Aorta (tissue), 5 donors: ENCODE measurements at regions of chr16 and their contacts with region 1.

Region 1: GRCh38 chr16:714558-715476 is at the start of gene METRN:
- DNase-seq: peak; percentile 94 to 98
- ATAC-seq: peak; percentile 91
- H3K4me3 ChIP-seq: peak within 1 kb of the TSS; percentile 50 to 64
- H3K27ac ChIP-seq: no peak within 1 kb of the TSS
- H3K4me1 ChIP-seq: no peaks in the 10 kb centered on the region
- H3K27me3 ChIP-seq: no peaks in the 10 kb centered on the region
- total RNA-seq, gene METRN: 22.7 to 26.6 TPM

Region 2: DNA sequence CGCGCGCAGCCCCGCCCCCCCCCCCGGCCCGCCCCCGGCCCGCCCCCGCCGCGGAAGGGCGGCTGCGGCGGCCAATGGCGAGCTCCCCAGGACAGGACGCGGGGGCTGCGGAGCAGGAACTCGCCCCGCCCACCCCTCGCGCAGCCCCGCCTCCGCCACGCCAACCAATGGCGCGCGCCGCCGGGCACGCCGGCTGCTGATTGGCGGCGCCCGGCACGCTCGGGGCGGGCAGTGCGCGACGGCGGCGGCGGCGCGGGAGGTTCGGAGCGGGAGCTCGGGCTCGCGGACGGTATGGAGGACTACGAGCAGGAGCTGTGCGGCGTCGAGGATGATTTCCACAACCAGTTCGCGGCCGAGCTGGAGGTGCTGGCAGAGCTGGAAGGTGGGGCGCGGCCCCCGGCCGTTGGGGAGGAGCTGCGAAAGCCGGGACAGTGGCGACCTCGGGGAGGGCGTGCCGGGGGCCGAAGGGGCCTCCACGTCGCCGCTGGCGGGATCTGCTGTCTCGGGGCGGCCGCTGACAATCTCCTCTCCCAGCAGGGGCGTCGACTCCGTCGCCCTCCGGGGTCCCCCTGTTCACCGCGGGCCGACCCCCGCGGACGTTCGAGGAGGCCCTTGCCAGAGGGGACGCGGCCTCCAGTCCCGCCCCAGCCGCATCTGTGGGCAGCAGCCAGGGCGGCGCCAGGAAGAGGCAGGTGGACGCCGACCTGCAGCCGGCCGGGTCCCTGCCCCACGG is 73.7 kb after region 1 on chr16 and contains the start of gene CHTF18:
- intact Hi-C with region 1: loop called (anchors 1 to 5 kb)
- DNase-seq: peak; percentile 94 to 97
- ATAC-seq: peak; percentile 93
- H3K4me3 ChIP-seq: peak within 1 kb of the TSS; percentile 46 to 70
- H3K27ac ChIP-seq: no peak within 1 kb of the TSS
- H3K4me1 ChIP-seq: no peaks in the 10 kb centered on the region
- H3K27me3 ChIP-seq: no peaks in the 10 kb centered on the region
- total RNA-seq, gene CHTF18: 7.1 to 14.3 TPM

Region 3: DNA sequence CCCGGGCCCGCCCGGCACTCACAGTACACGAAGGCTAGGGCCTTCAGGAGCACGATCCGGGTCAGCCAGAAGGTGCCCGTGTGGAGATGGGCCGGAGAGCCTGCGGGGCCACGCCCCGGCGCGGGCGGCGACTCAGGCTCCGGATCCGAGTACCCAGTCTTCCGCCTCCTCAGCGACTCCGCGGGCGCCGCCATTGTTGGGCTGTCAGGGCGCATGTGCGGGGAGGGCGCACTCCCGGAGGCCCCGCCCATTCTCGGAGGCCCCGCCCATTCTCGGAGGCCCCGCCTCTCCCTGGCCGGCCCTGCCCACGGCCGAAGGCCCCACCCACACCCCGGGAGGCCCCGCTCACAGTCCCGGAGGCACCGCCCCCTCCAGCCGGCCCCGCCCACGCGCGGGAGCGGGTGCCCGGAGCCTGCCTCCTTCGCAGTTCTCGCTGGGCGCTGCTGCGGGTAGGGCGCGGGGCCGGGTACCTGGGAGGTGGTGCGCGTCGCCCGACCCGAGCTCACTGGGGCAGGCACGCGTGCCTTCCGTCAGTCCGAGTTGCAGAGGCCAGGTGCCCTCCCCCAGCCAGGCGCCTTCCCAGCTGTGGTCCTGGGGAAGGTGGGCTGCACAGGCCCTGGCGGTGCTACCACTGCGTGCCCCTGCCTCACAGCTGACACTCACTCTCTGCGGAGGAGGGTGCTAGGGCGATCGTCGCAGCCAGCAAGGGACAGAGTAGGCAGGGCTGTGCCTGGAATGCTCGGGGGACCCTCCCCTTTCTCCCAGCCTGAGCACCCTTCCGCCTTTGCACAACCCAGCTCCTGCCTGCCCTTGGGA is 256.2 kb after region 1 on chr16 and contains the start of gene LMF1:
- intact Hi-C with region 1: loop called in 1 of 2 experiments (anchors 10 kb)
- DNase-seq: peak; percentile 95 to 99
- ATAC-seq: peak; percentile 98
- H3K4me3 ChIP-seq: peak within 1 kb of the TSS; percentile 69 to 70
- H3K27ac ChIP-seq: peak within 1 kb of the TSS in 1 of 2 donors; percentile 37
- H3K4me1 ChIP-seq: no peaks in the 10 kb centered on the region
- H3K27me3 ChIP-seq: no peaks in the 10 kb centered on the region
- total RNA-seq, gene LMF1: 18.2 to 38.4 TPM